ENCODE measurements at regions of chr2 and their contacts with region 1.

Region 1: GRCh38 chr2:98253461-98254070 is 92.7 kb upstream of the CNGA3 start:
- DNase-seq: no peak
- ATAC-seq: no peak
- H3K4me3 Mint-ChIP-seq: no peak overlapping the region
- H3K27ac Mint-ChIP-seq: no peak overlapping the region
- H3K4me1 Mint-ChIP-seq: peaks cover 8% of the 10 kb centered on the region
- H3K27me3 Mint-ChIP-seq: peaks cover 6% of the 10 kb centered on the region
- CTCF ChIP-seq: no peak

Region 2: DNA sequence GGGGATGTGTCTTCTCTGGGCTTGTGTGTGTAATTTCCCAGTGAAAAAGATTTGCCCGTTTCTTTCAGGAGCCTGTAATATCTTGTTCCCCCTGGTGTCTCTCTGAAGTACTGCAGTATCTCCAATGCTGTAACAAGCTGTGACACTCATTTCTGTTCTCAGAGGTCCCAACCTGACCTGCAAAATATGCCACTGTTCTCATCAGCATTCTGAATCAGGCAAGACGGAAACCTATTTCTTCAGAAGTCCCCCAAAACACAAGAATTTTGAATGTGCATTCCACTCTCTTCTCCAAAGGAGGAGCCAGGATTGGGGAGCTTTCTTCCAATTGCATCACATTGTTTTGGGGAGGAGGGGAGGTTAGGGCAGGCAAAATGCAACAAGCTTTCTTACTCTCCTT is 15.7 kb after region 1 on chr2:
- CTCF ChIA-PET with region 1: interaction called, 14 read pairs
- POLR2A ChIA-PET with region 1: interaction called, 7 read pairs
- intact Hi-C with region 1: no loop called
- DNase-seq: no peak
- ATAC-seq: peak; percentile 75
- H3K4me3 Mint-ChIP-seq: no peak overlapping the region
- H3K27ac Mint-ChIP-seq: no peak overlapping the region
- H3K4me1 Mint-ChIP-seq: no peaks in the 10 kb centered on the region
- H3K27me3 Mint-ChIP-seq: peaks cover 7% of the 10 kb centered on the region
- CTCF ChIP-seq: no peak

Measured in activated B cell treated with CpG ODN at 0.5 μM for 24 hours (primary cell).